ENCODE measurements at regions of chr15 and their contacts with region 1.

Region 1: GRCh38 chr15:70679919-70680231 is 83.5 kb downstream of the UACA start:
- DNase-seq: no peak
- H3K4me3 ChIP-seq: no peak overlapping the region
- H3K27ac ChIP-seq: no peak overlapping the region
- H3K4me1 ChIP-seq: peaks cover 0 to 3% of the 10 kb centered on the region in 2 donors
- H3K27me3 ChIP-seq: no peaks in the 10 kb centered on the region
- CTCF ChIP-seq: no peak

Region 2: DNA sequence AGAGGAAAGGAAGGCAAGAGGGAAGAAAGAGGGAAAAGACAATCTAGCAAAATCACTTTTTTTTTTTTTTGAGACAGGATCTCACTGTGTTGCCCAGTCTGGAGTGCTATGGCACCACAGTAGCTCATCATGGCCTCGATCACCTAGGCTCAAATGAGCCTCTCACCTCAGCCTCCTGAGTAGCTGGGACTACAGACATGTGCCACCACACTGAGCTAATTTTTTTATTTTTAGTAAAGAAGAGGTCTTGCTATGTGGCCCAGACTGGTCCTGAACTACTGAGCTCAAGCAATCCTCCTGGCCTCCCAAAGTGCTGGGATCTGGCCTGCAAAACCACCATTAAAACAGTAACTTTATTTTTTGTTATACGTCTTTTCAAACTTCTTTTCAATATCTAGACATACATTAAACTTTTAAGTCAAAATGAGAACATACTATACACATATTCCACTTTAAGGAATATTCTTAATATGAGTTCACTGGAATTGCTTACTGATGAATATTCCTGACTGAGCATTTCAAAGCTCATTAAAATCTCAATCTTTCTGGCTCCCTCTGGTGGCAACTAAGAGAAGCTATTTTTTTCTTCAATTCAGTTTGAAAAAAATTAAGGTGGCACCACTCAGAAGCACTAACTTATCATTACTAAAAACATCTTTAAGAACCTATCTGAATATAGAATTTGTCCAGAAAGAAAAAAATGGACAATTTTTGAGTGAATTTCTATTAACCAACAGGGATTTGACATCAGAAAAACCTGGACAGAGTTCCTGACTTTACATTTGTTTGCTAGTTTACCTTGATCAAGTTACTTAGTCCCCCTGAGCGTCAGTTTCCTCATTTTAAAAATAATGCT is 42.6 kb after region 1 on chr15:
- intact Hi-C with region 1: loop called (anchors 2 kb)
- DNase-seq: no peak
- H3K4me3 ChIP-seq: no peak overlapping the region
- H3K27ac ChIP-seq: peak overlapping the region in 1 of 2 donors; percentile 31
- H3K4me1 ChIP-seq: peaks cover 0 to 15% of the 10 kb centered on the region in 2 donors
- H3K27me3 ChIP-seq: no peaks in the 10 kb centered on the region
- CTCF ChIP-seq: peak; percentile 51 to 77 (median 69)

Region 3: GRCh38 chr15:70810916-70811578 is 131.2 kb after region 1 on chr15:
- intact Hi-C with region 1: loop called (anchors 1 kb)
- DNase-seq: no peak
- H3K4me3 ChIP-seq: no peak overlapping the region
- H3K27ac ChIP-seq: no peak overlapping the region
- H3K4me1 ChIP-seq: peaks cover 0 to 9% of the 10 kb centered on the region in 2 donors
- H3K27me3 ChIP-seq: no peaks in the 10 kb centered on the region
- CTCF ChIP-seq: no peak

Region 4: DNA sequence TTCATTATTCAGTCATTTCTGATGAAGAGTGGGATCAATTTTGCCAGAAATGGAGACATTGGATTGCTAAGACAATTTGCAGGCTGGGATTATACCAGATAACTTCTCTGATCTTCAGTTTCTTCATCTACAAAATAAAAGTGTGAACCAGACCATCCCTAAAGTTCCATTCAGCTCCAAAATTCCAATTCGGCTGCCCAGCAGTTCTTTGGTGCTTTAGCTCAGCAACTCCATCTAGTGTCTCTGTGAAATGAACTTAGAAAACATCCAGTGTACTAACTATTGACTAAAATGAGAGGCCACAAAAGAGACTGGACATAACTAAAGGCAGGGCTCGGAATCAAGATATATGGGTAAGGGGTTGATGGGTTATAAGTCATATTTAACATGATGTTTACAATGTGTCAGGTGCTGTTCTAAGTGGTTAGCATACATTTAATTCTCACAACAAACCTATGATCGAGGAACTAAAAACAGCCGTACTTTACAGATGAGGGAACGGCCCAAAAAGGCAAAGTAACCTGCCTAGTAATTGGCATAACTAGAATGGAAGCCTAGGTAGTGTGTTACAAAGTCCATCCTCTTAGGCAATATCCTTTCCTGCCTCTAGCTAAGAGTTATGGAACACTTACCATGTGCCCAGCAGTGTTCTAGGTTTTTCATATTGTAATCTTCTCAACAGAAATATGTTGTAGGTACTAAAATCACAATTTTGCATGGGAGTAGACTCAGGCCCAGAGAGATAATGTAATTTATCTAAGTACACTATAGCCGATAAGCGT is 195.3 kb after region 1 on chr15:
- intact Hi-C with region 1: loop called (anchors 5 kb)
- DNase-seq: no peak
- H3K4me3 ChIP-seq: no peak overlapping the region
- H3K27ac ChIP-seq: no peak overlapping the region
- H3K4me1 ChIP-seq: peaks cover 0 to 2% of the 10 kb centered on the region in 2 donors
- H3K27me3 ChIP-seq: no peaks in the 10 kb centered on the region
- CTCF ChIP-seq: peak; percentile 53 to 76 (median 57)